PC-3 (cell line): ENCODE measurements at regions of chr7 and their contacts with region 1.

Region 1: GRCh38 chr7:138008547-138009349 is 6.9 kb upstream of the CREB3L2 start:
- DNase-seq: peak; percentile 75
- ATAC-seq: peak; percentile 65
- H3K4me3 ChIP-seq: no peak overlapping the region
- H3K27ac ChIP-seq: no peak overlapping the region
- H3K4me1 ChIP-seq: peaks cover 4% of the 10 kb centered on the region; the same call in 1 of the 2 replicates
- H3K27me3 ChIP-seq: no peaks in the 10 kb centered on the region
- CTCF ChIP-seq: peak; percentile 86

Region 2: DNA sequence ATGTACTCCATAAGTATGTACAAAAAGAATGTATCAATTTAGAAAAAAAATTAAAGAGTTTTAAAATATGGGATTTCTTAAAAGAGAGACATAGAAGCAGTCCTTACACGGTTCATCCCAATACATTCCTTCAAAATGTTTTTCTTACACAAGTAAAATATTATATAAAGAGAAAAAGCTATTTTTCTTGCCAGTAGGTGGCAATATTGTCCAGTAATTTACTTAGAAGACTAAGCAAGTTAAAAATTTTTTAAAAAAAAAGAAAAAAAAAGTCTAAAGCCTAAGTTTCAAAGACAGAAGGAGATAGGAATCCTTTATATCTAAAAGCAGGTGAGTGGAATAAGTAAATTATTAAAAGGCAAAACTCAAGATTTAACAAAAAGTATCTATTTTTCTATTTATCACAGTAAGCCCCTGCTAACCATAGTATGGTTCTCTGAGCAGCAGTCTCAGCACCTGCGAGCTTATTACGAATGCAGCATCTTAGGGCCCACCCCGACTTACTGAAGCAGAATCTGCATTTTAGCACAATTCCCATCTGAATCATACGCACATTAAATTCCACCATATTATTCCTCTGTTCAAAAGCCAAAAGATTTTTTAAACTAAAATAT is 402.6 kb before region 1 on chr7:
- CTCF ChIA-PET with region 1: interaction called, 3 read pairs
- POLR2A ChIA-PET with region 1: no interaction called
- intact Hi-C with region 1: loop called (anchors 5 kb)
- DNase-seq: peak; percentile 80
- ATAC-seq: no peak
- H3K4me3 ChIP-seq: no peak overlapping the region
- H3K27ac ChIP-seq: no peak overlapping the region
- H3K4me1 ChIP-seq: no peaks in the 10 kb centered on the region
- H3K27me3 ChIP-seq: peaks cover 73% of the 10 kb centered on the region
- CTCF ChIP-seq: peak; percentile 58; the same call in 1 of the 2 replicates

Region 3: DNA sequence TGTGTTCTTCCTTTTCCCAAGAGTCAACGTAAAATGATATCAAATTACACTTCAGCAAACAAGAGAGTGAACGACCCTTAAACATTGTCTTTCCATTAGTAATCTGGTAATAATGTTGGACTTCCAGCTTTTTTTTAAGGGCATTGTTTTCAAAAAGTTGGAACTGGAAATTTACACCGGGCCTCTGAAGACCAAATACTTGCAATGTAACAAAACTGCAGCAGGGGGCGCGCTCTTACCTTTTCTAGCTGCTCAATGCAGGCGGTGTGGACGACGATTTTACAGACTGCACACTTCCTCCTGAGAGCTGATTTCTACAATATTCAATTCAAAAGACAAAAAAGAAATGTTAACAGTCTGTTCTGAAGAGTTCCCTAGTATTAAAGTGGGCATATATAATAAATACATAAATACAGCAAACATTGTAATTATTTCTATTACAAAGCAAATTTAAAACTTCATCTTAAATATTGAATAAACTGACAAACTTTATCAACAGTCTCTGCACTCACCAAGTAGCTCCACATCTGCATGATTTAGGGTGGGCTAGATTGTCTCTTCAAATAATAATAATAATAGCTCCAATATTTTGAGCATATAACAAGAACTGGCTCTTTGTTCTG is 352.4 kb before region 1 on chr7:
- CTCF ChIA-PET with region 1: no interaction called
- POLR2A ChIA-PET with region 1: no interaction called
- intact Hi-C with region 1: loop called (anchors 1 kb)
- DNase-seq: peak; percentile 81
- ATAC-seq: peak; percentile 86
- H3K4me3 ChIP-seq: no peak overlapping the region
- H3K27ac ChIP-seq: no peak overlapping the region
- H3K4me1 ChIP-seq: peaks cover 13% of the 10 kb centered on the region; the same call in 1 of the 2 replicates
- H3K27me3 ChIP-seq: 0 out of 2 replicates have a peak, but pooled peaks cover 5% of the 10 kb centered on the region
- CTCF ChIP-seq: peak; percentile 85

Region 4: DNA sequence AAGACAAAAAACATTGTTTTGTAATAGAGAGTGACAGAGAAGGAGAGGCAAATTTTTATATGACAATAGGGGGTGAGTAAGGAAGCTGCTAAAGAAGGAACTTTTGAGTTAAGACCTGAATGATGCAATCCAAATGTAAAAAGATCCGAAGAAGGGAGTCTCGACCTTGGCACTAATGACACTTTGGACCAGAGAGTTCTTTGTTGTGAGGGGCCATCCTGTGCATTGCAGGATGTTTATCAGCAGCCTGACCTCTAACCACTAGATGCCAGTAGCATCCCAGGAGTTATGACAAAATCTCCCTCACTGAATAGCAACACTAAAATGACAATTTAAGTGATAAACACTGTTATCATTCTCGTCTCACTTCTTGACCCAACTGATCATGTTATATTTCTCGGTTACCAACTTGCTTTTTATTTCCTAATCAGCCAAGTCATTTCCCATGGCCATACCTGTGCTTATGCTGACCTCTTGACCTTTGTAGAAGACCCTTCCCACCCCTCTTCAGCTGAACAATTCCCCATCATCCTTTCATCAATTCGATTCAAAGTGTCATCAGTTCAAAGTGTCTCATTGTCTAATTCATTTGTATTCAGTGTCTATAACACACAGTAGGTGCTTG is 191.9 kb before region 1 on chr7:
- CTCF ChIA-PET with region 1: interaction called, 3 read pairs
- POLR2A ChIA-PET with region 1: no interaction called
- intact Hi-C with region 1: loop called (anchors 2 kb)
- DNase-seq: peak; percentile 19
- ATAC-seq: no peak
- H3K4me3 ChIP-seq: no peak overlapping the region
- H3K27ac ChIP-seq: no peak overlapping the region
- H3K4me1 ChIP-seq: no peaks in the 10 kb centered on the region
- H3K27me3 ChIP-seq: peaks cover 53% of the 10 kb centered on the region
- CTCF ChIP-seq: peak; percentile 41; the same call in 1 of the 2 replicates

Region 5: DNA sequence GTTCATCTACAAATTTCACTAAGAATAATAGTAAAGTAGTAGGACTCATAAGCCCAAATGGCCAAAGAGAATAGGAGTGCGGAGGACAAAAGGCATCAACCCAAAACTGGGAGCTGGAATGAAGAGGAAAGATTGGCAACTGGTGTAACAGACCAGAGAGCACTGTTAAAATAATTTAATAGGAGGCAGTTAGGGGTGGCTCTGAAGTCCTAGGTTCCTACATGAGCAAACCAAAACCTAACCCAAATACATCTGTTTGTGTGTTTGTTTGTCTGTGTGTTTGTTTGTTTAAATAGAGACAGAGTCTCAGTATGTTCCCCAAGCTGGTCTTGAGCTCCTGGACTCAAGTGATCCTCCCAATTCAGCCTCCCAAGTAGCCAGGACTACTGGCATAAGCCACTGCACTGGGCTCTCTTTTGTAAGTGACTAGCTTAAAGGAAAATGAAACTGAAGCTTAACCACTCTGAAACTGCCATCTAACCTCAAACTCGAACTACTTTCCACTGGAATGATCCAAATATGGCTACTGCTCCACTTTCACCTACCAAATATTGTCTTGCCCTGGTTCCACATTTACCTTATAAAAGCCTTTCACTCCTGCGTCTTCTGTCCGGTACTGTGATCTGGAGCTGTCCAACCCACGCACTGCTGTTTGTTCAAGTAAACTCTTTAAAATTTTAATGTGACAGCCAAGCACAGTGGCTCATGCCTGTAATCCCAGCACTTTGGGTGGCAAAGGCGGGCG is 162.4 kb after region 1 on chr7:
- CTCF ChIA-PET with region 1: no interaction called
- POLR2A ChIA-PET with region 1: no interaction called
- intact Hi-C with region 1: no loop called
- DNase-seq: no peak
- ATAC-seq: no peak
- H3K4me3 ChIP-seq: no peak overlapping the region
- H3K27ac ChIP-seq: no peak overlapping the region
- H3K4me1 ChIP-seq: no peaks in the 10 kb centered on the region
- H3K27me3 ChIP-seq: no peaks in the 10 kb centered on the region
- CTCF ChIP-seq: no peak